Activated CD4-positive, alpha-beta memory T cell treated with anti-CD3 and anti-CD28 coated beads, Interleukin-2, amount 10 ng/mL, durations not matched to agents 7 days and 5 days (primary cell): ENCODE measurements at regions of chr3 and their contacts with region 1.

Region 1: GRCh38 chr3:52705688-52706686 is at the starts of genes GLT8D1 and SPCS1:
- DNase-seq: peak; percentile 86
- H3K4me3 Mint-ChIP-seq: peak within 1 kb of the TSS; percentile 95
- H3K27ac Mint-ChIP-seq: peak within 1 kb of the TSS; percentile 86
- H3K4me1 Mint-ChIP-seq: peaks cover 39% of the 10 kb centered on the region
- H3K27me3 Mint-ChIP-seq: no peaks in the 10 kb centered on the region
- total RNA-seq, gene GLT8D1: 43.4 to 46.7 TPM
- total RNA-seq, gene SPCS1: 107 to 108 TPM

Region 2: DNA sequence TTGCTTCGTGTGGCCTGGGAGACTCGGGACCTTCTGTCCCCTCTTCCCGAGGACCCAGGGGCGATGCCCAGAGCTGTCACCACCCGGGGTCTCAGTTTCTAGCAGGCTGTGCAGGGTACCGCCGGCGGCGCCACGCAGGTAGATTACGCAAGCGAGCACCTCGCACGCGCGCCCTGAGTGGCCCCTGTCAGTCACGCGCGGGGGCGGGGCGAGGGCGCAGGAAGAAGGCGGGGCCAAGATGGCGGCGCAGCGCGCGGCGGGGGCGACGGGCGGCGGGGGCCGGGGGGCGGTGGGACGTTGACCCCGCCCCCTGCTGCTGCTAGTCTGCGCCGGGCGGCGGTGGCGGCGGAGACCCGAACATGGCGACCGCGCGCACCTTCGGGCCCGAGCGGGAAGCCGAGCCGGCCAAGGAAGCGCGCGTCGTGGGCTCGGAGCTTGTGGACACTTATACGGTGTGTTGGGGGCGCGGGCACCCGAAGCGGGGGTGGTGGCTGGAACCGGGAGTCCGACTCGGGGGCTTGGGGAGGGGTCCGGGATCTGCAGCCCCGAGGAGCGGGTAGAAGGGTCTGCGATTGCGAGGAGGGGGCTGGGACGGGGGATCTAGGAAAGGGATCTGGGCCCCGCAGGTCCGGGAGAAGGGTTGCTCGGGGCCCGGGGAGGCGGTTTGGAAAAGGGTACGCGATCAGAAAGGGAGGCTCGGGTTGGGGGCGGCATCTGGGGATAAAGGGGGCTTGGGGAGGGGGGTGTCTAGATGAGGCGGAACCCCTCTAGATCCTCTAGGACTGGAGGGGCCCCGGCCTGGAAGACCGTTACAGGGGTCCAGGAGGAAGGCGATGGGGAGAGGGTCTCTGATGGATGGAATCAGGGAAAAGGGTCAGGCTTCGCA is 250.5 kb before region 1 on chr3 and contains the start of gene NISCH:
- CTCF ChIA-PET with region 1: no interaction called
- POLR2A ChIA-PET with region 1: no interaction called
- DNase-seq: peak; percentile 95
- H3K4me3 Mint-ChIP-seq: peak within 1 kb of the TSS; percentile 92
- H3K27ac Mint-ChIP-seq: peak within 1 kb of the TSS; percentile 81
- H3K4me1 Mint-ChIP-seq: peaks cover 34% of the 10 kb centered on the region
- H3K27me3 Mint-ChIP-seq: no peaks in the 10 kb centered on the region
- total RNA-seq, gene NISCH: 73.8 to 75.0 TPM

Region 3: DNA sequence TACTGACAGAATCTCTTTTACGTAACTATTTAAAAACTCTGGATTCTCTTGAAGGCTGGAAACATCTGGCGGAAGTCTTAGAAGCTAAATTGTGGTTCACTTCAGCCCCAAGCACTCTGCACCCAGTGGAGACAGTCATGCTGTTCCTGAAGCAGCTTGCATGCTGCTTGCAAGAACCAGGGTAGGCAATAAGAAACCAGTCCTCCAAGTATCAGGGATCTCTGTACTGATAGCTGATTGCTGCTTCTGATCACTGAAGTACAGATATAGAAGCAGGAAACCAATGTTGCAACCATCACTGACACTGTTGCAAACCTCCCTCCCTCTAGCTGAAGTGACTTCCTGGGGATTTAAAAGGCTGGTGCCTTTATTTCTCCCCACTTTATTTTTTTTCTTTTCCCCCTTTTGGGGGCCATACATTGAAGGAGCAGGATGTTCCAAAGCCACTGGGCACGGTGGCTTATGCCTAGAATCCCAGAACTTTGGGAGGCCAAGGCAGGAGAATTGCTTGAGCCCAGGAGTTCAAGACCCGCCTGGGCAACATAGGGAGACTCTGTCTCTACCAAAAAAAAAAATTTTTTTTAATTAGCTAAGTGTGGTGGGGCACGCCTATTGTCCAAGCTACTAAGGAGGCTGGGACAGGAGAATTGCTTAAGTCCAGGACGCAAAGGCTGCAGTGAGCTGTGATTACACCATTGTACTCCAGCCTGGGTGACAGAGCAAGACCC is 15.2 kb after region 1 on chr3:
- CTCF ChIA-PET with region 1: no interaction called
- POLR2A ChIA-PET with region 1: interaction called, 15 read pairs
- DNase-seq: peak; percentile 27
- H3K4me3 Mint-ChIP-seq: no peak overlapping the region
- H3K27ac Mint-ChIP-seq: peak overlapping the region; percentile 77
- H3K4me1 Mint-ChIP-seq: peaks cover 23% of the 10 kb centered on the region
- H3K27me3 Mint-ChIP-seq: no peaks in the 10 kb centered on the region